Activated CD8-positive, alpha-beta T cell treated with anti-CD3 and anti-CD28 coated beads for 36 hours (primary cell): ENCODE measurements at regions of chr9 and their contacts with region 1.

Region 1: DNA sequence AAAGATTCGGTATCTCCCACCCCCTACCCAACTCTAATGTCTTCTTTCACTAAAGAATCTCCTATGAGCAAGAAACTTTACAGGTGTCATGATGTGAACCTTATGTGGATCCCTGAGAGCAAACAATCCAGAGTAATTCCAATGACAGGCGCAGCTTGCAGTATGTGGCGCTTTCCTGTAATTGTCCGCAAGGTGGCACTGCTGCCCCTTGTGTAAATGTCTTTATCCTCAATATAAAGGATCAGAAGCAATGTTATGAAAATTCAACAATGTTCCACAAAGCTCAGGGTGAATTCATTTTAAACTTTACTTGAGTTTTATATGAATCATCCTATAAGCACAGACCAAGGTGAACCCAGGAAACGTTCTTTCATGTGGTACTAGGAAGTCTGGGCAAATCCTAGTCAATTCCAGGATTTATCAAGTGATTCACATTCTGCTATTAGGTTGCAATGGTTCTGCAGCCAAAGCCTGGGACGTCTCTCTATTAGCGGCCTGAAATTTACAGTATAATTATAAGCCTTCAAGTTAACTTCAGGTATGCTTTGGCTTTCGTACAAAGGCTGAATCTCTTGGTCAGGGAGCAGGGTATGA is 113.7 kb downstream of the TRPM6 start:
- DNase-seq: peak; percentile 86
- ATAC-seq: peak; percentile 77
- H3K4me3 Mint-ChIP-seq: no peak overlapping the region
- H3K27ac Mint-ChIP-seq: no peak overlapping the region
- H3K4me1 Mint-ChIP-seq: peaks cover 11% of the 10 kb centered on the region
- H3K27me3 Mint-ChIP-seq: peaks cover 20% of the 10 kb centered on the region
- CTCF ChIP-seq: peak; percentile 90

Region 2: GRCh38 chr9:74952281-74953151 is 178.5 kb after region 1 on chr9 and contains the start of gene C9orf40:
- CTCF ChIA-PET with region 1: interaction called, 68 read pairs
- POLR2A ChIA-PET with region 1: no interaction called
- intact Hi-C with region 1: loop called (anchors 5 kb)
- DNase-seq: peak; percentile 91
- ATAC-seq: peak; percentile 93
- H3K4me3 Mint-ChIP-seq: peak within 1 kb of the TSS; percentile 92
- H3K27ac Mint-ChIP-seq: peak within 1 kb of the TSS; percentile 88
- H3K4me1 Mint-ChIP-seq: peaks cover 30% of the 10 kb centered on the region
- H3K27me3 Mint-ChIP-seq: no peaks in the 10 kb centered on the region
- CTCF ChIP-seq: peak; percentile 89
- total RNA-seq, gene C9orf40: 18.6 to 20.9 TPM

Region 3: GRCh38 chr9:75013735-75014134 is 239.8 kb after region 1 on chr9:
- CTCF ChIA-PET with region 1: interaction called, 161 read pairs
- POLR2A ChIA-PET with region 1: no interaction called
- intact Hi-C with region 1: no loop called
- DNase-seq: no peak
- ATAC-seq: no peak
- H3K4me3 Mint-ChIP-seq: no peak overlapping the region
- H3K27ac Mint-ChIP-seq: no peak overlapping the region
- H3K4me1 Mint-ChIP-seq: peaks cover 34% of the 10 kb centered on the region
- H3K27me3 Mint-ChIP-seq: no peaks in the 10 kb centered on the region
- CTCF ChIP-seq: no peak

Region 4: DNA sequence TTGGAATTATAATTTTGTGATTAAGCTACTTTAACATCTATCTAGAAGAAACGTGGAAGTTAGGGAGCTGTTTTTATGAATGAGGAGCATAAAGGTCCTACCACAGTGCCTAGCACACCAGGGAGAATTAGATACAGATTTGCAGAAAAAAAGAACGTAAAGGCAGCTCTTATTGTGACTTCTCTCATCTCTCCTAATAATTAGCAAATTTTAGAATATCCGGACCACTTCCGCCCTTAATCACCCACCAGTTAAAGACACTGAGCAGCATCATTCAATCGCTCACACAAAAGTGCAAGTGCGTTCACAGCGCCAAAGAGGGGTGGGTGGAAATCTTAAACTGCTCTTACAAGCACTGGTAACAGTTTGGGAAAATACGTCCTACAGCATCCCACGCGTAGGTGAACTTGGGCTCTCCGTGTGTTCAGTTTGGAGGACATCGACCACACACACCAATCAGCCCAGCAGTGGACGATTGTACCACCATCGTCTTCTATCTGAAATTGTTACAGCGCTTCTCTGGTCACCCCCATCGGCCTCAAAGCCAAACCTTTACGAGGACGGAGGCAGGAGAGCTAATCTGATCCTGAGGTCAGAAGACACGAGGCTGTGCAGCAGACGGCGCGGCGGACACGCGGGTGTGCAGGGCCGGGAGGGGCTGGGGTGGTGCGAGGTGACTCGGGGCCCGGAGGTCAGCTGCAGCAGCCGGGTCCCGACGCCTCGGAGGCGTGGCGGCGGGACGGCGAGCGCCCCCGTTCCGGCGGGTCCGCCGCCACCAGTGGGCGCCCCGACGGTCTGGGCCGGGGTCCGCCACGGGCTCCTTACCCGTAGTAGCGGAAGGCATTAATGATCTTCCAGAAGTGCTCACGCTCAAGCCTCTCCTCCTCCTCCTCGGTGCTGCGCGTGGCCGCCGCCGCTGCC is 253.5 kb after region 1 on chr9:
- CTCF ChIA-PET with region 1: interaction called, 13 read pairs
- POLR2A ChIA-PET with region 1: interaction called, 3 read pairs
- intact Hi-C with region 1: no loop called
- DNase-seq: peak; percentile 66
- ATAC-seq: peak; percentile 29
- H3K4me3 Mint-ChIP-seq: peak overlapping the region; percentile 99
- H3K27ac Mint-ChIP-seq: peak overlapping the region; percentile 97
- H3K4me1 Mint-ChIP-seq: peaks cover 36% of the 10 kb centered on the region
- H3K27me3 Mint-ChIP-seq: no peaks in the 10 kb centered on the region
- CTCF ChIP-seq: peak; percentile 15

Region 5: DNA sequence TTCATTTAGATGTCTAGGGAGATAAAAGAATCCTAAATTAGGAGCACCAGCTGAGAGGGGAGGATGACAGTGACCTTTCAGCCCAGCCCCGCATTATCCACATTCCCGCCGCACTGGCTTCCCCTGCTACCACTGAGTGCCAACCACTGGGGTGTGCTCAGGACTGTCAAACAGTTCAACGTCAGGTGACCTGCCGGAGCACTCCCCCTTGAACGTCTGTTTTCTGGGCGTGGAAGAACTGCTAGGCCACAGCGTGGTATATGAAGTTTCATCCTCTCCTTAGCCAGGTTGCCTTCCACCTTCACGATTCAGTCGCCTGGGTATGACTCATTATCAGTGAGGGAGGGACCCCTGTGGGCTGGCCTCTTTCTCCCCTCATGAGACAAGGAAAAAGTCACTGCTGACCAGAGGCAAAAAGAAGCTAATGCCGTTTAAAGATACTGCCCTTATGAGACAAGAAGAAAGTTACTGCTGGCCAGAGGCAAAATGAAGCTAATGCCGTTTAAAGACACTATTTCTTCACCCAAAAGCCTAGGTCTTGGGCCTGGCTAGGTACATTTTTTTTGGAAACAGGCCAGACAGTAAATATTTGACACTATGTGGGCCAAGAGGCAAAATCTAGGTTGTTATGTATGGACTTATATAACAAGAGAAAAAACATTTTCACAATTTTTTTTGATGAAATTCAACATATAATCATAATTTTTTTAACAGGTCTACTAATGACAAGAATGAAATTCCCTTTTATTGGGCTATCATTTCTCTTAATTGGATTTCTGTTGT is 309.4 kb after region 1 on chr9:
- CTCF ChIA-PET with region 1: interaction called, 30 read pairs
- POLR2A ChIA-PET with region 1: interaction called, 4 read pairs
- intact Hi-C with region 1: no loop called
- DNase-seq: peak; percentile 65
- ATAC-seq: peak; percentile 40
- H3K4me3 Mint-ChIP-seq: no peak overlapping the region
- H3K27ac Mint-ChIP-seq: peak overlapping the region; percentile 80
- H3K4me1 Mint-ChIP-seq: peaks cover 42% of the 10 kb centered on the region
- H3K27me3 Mint-ChIP-seq: no peaks in the 10 kb centered on the region
- CTCF ChIP-seq: no peak